IMR-90 (cell line): ENCODE measurements at regions of chr22 and their contacts with region 1.

Region 1: DNA sequence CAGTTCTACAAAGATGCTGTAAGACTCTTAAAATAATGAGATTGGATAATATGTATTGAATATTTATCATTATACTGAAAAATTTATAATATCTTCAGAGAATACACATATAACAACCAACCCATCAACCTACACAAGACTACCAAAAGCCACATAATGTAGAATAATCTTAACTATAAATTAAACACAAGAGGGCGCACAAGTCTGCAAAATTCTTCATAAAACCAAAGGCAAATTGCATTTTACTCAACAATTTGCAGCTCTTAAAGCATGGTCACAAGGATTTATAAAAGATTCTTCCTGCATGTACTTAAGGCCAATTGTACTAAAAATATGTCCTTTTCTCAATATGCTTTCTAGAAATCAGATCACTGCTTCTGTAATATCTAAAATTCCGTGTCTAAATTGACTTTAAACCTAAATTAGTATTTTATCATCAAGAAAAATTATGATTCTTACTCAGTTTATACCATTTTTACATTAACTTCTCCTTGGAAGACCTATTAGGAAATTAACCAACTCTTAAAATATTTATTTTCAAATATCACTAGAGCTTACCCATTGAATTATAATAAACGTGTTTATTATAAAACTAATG is 79.0 kb downstream of the TTC28 start:
- DNase-seq: peak; percentile 72
- ATAC-seq: peak; percentile 51; the same call in 1 of the 2 replicates
- H3K4me3 ChIP-seq: no peak overlapping the region
- H3K27ac ChIP-seq: no peak overlapping the region
- H3K4me1 ChIP-seq: peaks cover 6% of the 10 kb centered on the region; the same call in 1 of the 2 replicates
- H3K27me3 ChIP-seq: no peaks in the 10 kb centered on the region
- CTCF ChIP-seq: peak; percentile 65
- POLR2A ChIP-seq: no peak
- RAD21 ChIP-seq: peak; percentile 80

Region 2: GRCh38 chr22:28129319-28129962 is 471.2 kb before region 1 on chr22:
- CTCF ChIA-PET with region 1: no interaction called
- POLR2A ChIA-PET with region 1: no interaction called
- dilution Hi-C with region 1: no loop called
- in situ Hi-C with region 1: no loop called
- intact Hi-C with region 1: no loop called
- DNase-seq: no peak
- ATAC-seq: no peak
- H3K4me3 ChIP-seq: no peak overlapping the region
- H3K27ac ChIP-seq: no peak overlapping the region
- H3K4me1 ChIP-seq: no peaks in the 10 kb centered on the region
- H3K27me3 ChIP-seq: no peaks in the 10 kb centered on the region
- CTCF ChIP-seq: no peak
- POLR2A ChIP-seq: no peak
- RAD21 ChIP-seq: no peak

Region 3: DNA sequence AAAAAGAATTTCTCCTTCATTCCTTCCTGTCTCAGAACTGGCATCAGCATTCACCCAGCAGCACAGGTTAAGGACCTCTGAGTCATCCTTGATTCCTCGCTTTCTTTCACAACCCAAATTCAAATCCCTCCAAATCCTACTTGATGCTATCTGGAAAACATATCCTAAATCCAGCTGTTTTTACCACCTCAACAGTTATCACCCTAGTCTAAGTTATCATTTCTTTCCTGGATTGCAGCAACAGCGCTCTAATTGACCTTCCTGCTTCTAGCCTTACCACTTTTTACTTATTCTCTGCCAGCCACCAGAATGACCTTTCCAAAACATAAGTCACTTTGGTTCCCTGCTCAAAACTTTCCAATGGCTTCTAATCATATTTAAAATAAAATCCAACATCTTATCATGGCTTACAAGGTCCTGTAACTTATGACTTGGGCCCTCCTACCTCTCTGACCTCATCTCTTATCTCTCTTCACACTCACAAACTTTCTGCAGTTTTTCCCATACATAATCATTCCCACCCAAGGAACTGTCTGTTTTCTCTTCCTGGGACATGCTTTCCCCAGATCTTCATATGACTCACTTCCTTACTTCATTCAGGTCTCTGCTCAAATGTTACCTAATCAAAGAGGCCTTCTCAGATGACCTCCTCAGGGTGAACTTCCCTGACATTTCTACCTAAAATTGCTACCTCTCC is 40.5 kb before region 1 on chr22:
- CTCF ChIA-PET with region 1: no interaction called
- POLR2A ChIA-PET with region 1: no interaction called
- dilution Hi-C with region 1: no loop called
- in situ Hi-C with region 1: no loop called
- intact Hi-C with region 1: no loop called
- DNase-seq: peak; percentile 82
- ATAC-seq: peak; percentile 53
- H3K4me3 ChIP-seq: no peak overlapping the region
- H3K27ac ChIP-seq: no peak overlapping the region
- H3K4me1 ChIP-seq: peaks cover 2% of the 10 kb centered on the region; the same call in 1 of the 2 replicates
- H3K27me3 ChIP-seq: no peaks in the 10 kb centered on the region
- CTCF ChIP-seq: no peak
- POLR2A ChIP-seq: no peak
- RAD21 ChIP-seq: no peak

Region 4: DNA sequence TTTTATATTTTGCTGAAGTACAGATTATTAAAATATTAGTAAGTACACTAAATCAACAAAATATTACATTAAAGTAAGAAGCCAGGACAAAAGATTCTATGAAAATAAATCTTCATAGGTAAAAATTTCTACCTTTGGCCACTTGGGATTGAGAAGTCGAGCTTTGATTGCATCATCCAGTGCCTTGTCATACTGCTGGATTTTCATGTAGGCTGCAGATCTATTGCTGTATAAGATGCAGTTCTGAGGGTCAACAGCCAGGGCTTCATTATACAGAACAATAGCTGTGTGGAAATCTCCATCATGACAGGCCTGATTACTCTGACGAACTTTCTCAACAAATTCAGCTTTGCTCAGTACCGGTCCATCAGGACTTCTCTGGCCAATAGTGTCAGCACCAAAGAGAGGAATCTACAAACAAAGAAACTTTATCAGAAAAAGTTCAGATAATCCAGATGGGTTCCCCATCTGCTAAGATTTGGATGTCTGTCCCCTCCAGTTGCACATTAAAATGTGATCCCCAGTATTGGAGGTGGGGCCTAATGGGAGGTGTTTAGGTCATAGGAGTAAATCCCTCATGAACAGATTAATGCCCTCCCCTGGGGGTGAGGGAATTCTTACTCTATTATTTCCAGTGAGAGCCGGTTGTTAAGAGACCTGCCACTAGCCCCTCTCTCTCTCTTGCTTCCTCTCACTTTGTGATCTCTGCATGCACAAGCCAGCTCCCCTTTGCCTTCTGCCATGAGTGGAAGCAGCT is 29.0 kb after region 1 on chr22:
- CTCF ChIA-PET with region 1: no interaction called
- POLR2A ChIA-PET with region 1: no interaction called
- dilution Hi-C with region 1: no loop called
- in situ Hi-C with region 1: no loop called
- intact Hi-C with region 1: no loop called
- DNase-seq: peak; percentile 24
- ATAC-seq: no peak
- H3K4me3 ChIP-seq: no peak overlapping the region
- H3K27ac ChIP-seq: no peak overlapping the region
- H3K4me1 ChIP-seq: 0 out of 2 replicates have a peak, but pooled peaks cover 1% of the 10 kb centered on the region
- H3K27me3 ChIP-seq: no peaks in the 10 kb centered on the region
- CTCF ChIP-seq: no peak
- POLR2A ChIP-seq: no peak
- RAD21 ChIP-seq: no peak

Region 5: DNA sequence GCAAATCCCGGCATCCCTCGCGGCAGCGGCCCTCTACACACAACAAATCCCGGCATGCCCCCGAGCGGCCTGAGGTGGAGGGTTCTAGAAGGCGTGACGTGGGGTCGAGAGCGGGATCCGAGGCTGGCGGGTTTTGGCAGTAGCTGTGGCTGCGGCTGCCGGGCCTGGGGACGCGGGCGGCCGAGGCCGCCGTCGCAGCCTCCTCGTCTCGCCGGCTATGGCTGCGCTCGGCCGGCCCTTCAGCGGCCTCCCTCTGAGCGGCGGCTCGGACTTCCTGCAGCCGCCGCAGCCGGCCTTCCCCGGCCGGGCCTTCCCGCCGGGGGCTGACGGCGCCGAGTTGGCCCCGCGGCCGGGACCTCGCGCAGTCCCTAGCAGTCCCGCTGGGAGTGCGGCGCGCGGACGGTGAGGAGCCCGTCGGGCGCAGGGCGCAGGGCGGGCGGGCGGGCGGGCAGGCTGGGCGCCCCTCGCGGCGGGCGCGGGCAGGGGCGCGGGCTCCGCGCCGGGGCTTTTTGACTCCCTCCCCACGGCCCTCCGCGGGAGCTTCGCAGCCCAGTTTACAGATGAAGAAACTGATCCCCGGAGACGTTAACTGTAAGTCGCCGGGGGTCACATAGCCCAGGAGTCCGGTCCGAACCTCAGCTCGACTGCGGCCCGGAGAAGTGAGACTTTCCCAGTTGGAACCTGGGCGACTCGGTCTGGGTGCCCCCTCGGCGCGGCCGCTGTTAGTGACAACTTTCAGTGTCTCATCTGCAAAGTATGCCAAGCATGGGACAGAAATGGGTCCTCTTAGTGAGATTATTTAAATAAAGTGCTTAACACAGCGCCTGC is 172.2 kb after region 1 on chr22 and contains the start of gene CCDC117:
- CTCF ChIA-PET with region 1: interaction called, 3 read pairs
- POLR2A ChIA-PET with region 1: no interaction called
- dilution Hi-C with region 1: no loop called
- in situ Hi-C with region 1: no loop called
- intact Hi-C with region 1: loop called (anchors 5 kb)
- DNase-seq: peak; percentile 95
- ATAC-seq: peak; percentile 95
- H3K4me3 ChIP-seq: peak within 1 kb of the TSS; percentile 61
- H3K27ac ChIP-seq: peak within 1 kb of the TSS; percentile 79
- H3K4me1 ChIP-seq: no peaks in the 10 kb centered on the region
- H3K27me3 ChIP-seq: no peaks in the 10 kb centered on the region
- CTCF ChIP-seq: peak; percentile 45
- POLR2A ChIP-seq: peak; percentile 71; the same call in 1 of the 2 replicates
- RAD21 ChIP-seq: no peak; the same call in 1 of the 2 replicates
- total RNA-seq, gene CCDC117: 7.0 and 15.6 TPM in 2 replicates

Region 6: GRCh38 chr22:28829358-28830181 is 228.9 kb after region 1 on chr22:
- CTCF ChIA-PET with region 1: interaction called, 23 read pairs
- POLR2A ChIA-PET with region 1: no interaction called
- dilution Hi-C with region 1: no loop called
- in situ Hi-C with region 1: loop called (anchors 5 kb)
- intact Hi-C with region 1: loop called (anchors 1 kb)
- DNase-seq: peak; percentile 73
- ATAC-seq: peak; percentile 97
- H3K4me3 ChIP-seq: no peak overlapping the region
- H3K27ac ChIP-seq: no peak overlapping the region
- H3K4me1 ChIP-seq: no peaks in the 10 kb centered on the region
- H3K27me3 ChIP-seq: no peaks in the 10 kb centered on the region
- CTCF ChIP-seq: peak; percentile 97
- POLR2A ChIP-seq: no peak; the same call in 1 of the 2 replicates
- RAD21 ChIP-seq: peak; percentile 94

Region 7: GRCh38 chr22:29040385-29041275 is 440.0 kb after region 1 on chr22:
- CTCF ChIA-PET with region 1: interaction called, 4 read pairs
- POLR2A ChIA-PET with region 1: no interaction called
- dilution Hi-C with region 1: no loop called
- in situ Hi-C with region 1: loop called (anchors 10 kb)
- intact Hi-C with region 1: loop called (anchors 1 kb)
- DNase-seq: peak; percentile 93
- ATAC-seq: peak; percentile 75
- H3K4me3 ChIP-seq: no peak overlapping the region
- H3K27ac ChIP-seq: no peak overlapping the region
- H3K4me1 ChIP-seq: peaks cover 12% of the 10 kb centered on the region
- H3K27me3 ChIP-seq: no peaks in the 10 kb centered on the region
- CTCF ChIP-seq: peak; percentile 99
- POLR2A ChIP-seq: peak; percentile 51; the same call in 1 of the 2 replicates
- RAD21 ChIP-seq: peak; percentile 94

Region 8: GRCh38 chr22:29245637-29246385 is 645.2 kb after region 1 on chr22:
- CTCF ChIA-PET with region 1: no interaction called
- POLR2A ChIA-PET with region 1: no interaction called
- dilution Hi-C with region 1: no loop called
- in situ Hi-C with region 1: loop called (anchors 25 kb)
- intact Hi-C with region 1: loop called (anchors 2 kb)
- DNase-seq: peak; percentile 54
- ATAC-seq: peak; percentile 100
- H3K4me3 ChIP-seq: no peak overlapping the region
- H3K27ac ChIP-seq: no peak overlapping the region
- H3K4me1 ChIP-seq: no peaks in the 10 kb centered on the region
- H3K27me3 ChIP-seq: peaks cover 4% of the 10 kb centered on the region
- CTCF ChIP-seq: peak; percentile 95
- POLR2A ChIP-seq: no peak
- RAD21 ChIP-seq: peak; percentile 96